GM12878 (cell line): ENCODE measurements at regions of chr2 and their contacts with region 1.

Region 1: GRCh38 chr2:7437716-7438632 is 520.8 kb downstream of the RNF144A start:
- DNase-seq: peak; percentile 41
- ATAC-seq: peak; percentile 76
- H3K4me3 ChIP-seq: no peak overlapping the region
- H3K27ac ChIP-seq: peak overlapping the region; percentile 8; the same call in 1 of the 2 replicates
- H3K4me1 ChIP-seq: peaks cover 16% of the 10 kb centered on the region
- H3K27me3 ChIP-seq: no peaks in the 10 kb centered on the region; a peak in 1 of 4 replicates
- CTCF ChIP-seq: no peak
- EP300 ChIP-seq: peak; percentile 82 to 83; a peak in 2 of 4 replicates
- POLR2A ChIP-seq: no peak
- RAD21 ChIP-seq: no peak

Region 2: DNA sequence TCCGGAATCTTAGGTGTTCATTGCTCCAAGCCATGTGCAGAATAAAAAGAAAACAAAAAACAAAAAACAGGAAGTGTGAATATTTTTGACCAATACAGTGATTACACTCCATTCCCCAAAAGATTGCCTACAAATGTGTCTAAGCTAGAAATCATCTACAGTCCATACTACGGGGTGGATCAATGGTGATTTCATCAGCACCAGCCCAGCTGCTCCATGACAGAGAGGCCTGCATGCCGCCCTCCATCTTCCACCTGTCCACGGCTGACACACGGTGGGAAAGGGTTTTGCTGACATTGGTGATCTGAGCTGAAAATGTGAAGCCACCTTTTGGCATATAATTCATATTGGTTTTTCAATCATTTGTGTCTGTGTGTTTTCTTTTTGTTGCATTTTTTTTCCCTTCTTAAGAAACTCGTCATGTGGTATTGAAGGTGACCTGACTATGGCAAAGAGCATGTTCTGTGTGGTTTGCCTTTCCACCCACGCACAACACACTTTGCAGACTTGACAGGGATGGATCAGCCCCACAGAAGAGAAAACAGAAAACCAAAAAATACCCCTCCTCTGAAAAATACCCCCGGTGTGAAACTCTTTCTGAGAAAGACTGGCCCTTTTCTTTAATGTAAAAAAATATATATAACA is 12.3 kb after region 1 on chr2:
- CTCF ChIA-PET with region 1: interaction called, 3 read pairs
- POLR2A ChIA-PET with region 1: interaction called, 3 read pairs
- RAD21 ChIA-PET with region 1: interaction called, 3 read pairs
- SMC1A ChIA-PET with region 1: interaction called, 10 read pairs
- in situ Hi-C with region 1: no loop called
- intact Hi-C with region 1: no loop called
- DNase-seq: no peak
- ATAC-seq: peak; percentile 74
- H3K4me3 ChIP-seq: no peak overlapping the region
- H3K27ac ChIP-seq: no peak overlapping the region
- H3K4me1 ChIP-seq: peaks cover 6% of the 10 kb centered on the region
- H3K27me3 ChIP-seq: no peaks in the 10 kb centered on the region
- CTCF ChIP-seq: no peak
- EP300 ChIP-seq: no peak
- POLR2A ChIP-seq: no peak
- RAD21 ChIP-seq: no peak

Region 3: GRCh38 chr2:7467782-7468447 is 29.9 kb after region 1 on chr2:
- CTCF ChIA-PET with region 1: interaction called, 5 read pairs
- POLR2A ChIA-PET with region 1: interaction called, 3 read pairs
- RAD21 ChIA-PET with region 1: interaction called, 5 read pairs
- SMC1A ChIA-PET with region 1: interaction called, 6 read pairs
- in situ Hi-C with region 1: no loop called
- intact Hi-C with region 1: loop called (anchors 2 kb)
- DNase-seq: no peak
- ATAC-seq: peak; percentile 58
- H3K4me3 ChIP-seq: no peak overlapping the region
- H3K27ac ChIP-seq: no peak overlapping the region
- H3K4me1 ChIP-seq: no peaks in the 10 kb centered on the region
- H3K27me3 ChIP-seq: 0 out of 4 replicates have a peak, but pooled peaks cover 0 to 2% of the 10 kb centered on the region in 2 experiments
- CTCF ChIP-seq: no peak
- EP300 ChIP-seq: no peak
- POLR2A ChIP-seq: no peak
- RAD21 ChIP-seq: no peak

Region 4: DNA sequence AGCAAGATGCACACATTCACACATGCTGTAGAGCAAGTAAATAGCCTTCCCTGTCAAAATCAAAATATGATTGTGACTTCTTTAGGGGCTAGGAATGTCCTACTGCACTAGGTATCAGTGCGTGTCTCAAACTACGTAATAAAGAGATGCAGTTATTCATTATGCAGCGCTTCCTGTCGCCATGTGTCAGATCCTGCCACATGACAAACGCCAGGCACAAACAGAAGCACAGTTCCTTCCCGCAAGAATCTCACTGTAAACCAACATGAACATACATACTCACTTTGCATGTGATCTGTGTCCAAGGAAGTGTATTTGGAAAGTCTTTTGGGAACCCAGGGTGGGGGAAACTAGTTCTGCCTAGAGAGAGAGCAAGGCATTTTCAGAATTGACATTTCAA is 79.1 kb after region 1 on chr2:
- CTCF ChIA-PET with region 1: interaction called, 3 read pairs
- POLR2A ChIA-PET with region 1: no interaction called
- RAD21 ChIA-PET with region 1: interaction called, 4 read pairs
- SMC1A ChIA-PET with region 1: interaction called, 8 read pairs
- in situ Hi-C with region 1: no loop called
- intact Hi-C with region 1: loop called (anchors 2 kb)
- DNase-seq: no peak
- ATAC-seq: peak; percentile 68
- H3K4me3 ChIP-seq: no peak overlapping the region
- H3K27ac ChIP-seq: no peak overlapping the region
- H3K4me1 ChIP-seq: peaks cover 17% of the 10 kb centered on the region
- H3K27me3 ChIP-seq: peaks cover 0 to 2% of the 10 kb centered on the region in 2 experiments; a peak in 1 of 4 replicates
- CTCF ChIP-seq: no peak
- EP300 ChIP-seq: no peak; a peak in 2 of 4 replicates
- POLR2A ChIP-seq: no peak
- RAD21 ChIP-seq: no peak

Region 5: DNA sequence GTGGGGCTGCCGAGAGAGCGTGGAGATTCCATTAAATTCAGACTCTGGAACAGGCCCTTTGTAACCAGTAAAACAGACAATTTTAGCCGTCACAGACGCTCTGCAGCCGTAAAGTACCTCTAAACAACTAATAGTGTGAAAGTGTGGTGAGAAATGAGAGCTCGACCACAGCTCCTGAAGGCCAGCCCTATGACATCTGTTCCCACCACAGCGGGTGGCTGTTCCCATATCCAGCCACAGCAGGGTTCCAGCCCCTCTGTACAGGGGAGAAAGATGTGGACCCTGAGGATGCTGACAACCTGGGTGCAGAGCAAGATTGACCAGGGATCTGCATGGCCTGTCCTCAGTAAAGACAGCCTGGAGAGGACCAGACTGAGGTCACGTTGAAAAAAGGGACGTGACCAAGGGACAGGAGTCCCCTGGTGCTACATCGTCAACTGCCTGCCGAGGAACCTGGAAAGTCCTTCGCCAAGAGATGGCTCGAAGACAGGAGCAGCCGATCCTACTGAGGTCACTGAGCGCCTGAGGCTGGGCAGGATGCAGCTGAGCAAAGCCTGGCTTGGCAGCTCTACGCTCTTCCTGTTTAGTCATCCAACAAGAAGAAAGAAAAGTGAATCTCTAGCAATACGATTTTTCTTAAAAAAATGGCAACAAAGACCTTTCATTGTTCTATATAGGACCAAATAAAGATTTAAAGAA is 310.9 kb after region 1 on chr2:
- CTCF ChIA-PET with region 1: no interaction called
- POLR2A ChIA-PET with region 1: no interaction called
- RAD21 ChIA-PET with region 1: no interaction called
- SMC1A ChIA-PET with region 1: no interaction called
- in situ Hi-C with region 1: no loop called
- intact Hi-C with region 1: no loop called
- DNase-seq: no peak
- ATAC-seq: peak; percentile 70
- H3K4me3 ChIP-seq: no peak overlapping the region
- H3K27ac ChIP-seq: peak overlapping the region; percentile 43
- H3K4me1 ChIP-seq: peaks cover 3% of the 10 kb centered on the region; the same call in 1 of the 2 replicates
- H3K27me3 ChIP-seq: no peaks in the 10 kb centered on the region
- CTCF ChIP-seq: no peak
- EP300 ChIP-seq: 0 out of 4 replicates have a peak, but pooled peaks of 1 of the 2 experiments have one; percentile 14
- POLR2A ChIP-seq: no peak
- RAD21 ChIP-seq: no peak